HCT116 (cell line): ENCODE measurements at regions of chr16 and their contacts with region 1.

Region 1: DNA sequence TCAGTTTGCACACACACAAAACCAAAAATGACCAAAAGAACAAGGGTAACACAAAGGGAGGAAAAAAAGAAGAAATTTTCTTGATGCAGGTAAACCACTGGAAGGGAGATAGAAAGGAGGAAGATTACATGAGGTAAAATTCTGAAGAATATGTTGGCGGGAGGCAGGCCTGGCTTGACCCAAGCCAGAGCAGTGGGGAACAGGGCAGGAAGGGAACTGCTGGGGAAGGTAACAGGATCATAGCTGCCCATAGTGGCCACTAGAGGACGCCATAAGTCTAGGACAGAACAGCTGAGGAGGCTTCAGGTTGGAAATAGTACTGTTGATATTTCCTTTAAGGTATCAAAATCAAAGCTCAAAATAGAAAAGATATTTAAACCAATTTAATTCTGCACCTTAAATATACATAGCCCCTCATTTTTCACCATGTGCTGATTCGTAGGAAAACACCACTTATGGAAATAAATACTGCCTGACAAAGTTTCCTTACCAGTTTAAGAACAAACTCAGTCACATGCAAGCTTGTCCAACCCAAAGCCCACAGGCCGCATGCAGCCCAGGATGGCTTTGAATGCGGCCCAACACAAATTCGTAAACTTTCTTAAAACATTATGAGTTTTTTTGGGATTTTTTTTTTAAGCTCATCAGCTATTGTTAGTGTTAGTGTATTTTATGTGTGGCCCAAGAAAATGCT is 15.5 kb downstream of the VPS35 start:
- DNase-seq: peak; percentile 51
- ATAC-seq: peak; percentile 100
- H3K4me3 ChIP-seq: no peak overlapping the region
- H3K27ac ChIP-seq: no peak overlapping the region
- H3K4me1 ChIP-seq: no peaks in the 10 kb centered on the region
- H3K27me3 ChIP-seq: no peaks in the 10 kb centered on the region
- CTCF ChIP-seq: peak; percentile 46 to 99 (median 98); a peak in 5 of 6 replicates
- POLR2A ChIP-seq: no peak
- RAD21 ChIP-seq: peak; percentile 76

Region 2: DNA sequence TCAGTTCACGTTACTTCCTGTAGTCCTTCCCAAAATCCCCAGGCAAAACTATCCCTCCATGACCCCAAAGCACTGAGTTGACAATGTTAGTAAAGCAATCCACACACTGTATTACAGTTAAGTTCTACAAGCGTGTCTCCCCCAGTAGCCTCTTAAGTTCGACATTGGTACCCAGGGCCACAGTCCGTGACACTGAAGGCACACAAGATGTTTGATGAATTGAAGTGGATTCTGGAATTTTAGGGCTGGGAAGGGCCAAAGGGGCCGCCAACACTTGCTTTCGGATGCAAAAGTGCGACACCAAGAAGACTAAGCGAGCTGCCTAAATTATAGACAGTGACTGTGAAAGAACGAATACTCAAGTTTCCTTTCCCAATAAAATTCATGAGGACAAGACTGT is 14.0 kb after region 1 on chr16:
- CTCF ChIA-PET with region 1: interaction called, 12 read pairs
- POLR2A ChIA-PET with region 1: no interaction called
- RAD21 ChIA-PET with region 1: no interaction called
- intact Hi-C with region 1: no loop called
- DNase-seq: no peak
- ATAC-seq: no peak
- H3K4me3 ChIP-seq: peak overlapping the region; percentile 82 to 95
- H3K27ac ChIP-seq: no peak overlapping the region
- H3K4me1 ChIP-seq: peaks cover 14 to 23% of the 10 kb centered on the region in 2 experiments; a peak in 3 of 4 replicates
- H3K27me3 ChIP-seq: no peaks in the 10 kb centered on the region
- CTCF ChIP-seq: no peak
- POLR2A ChIP-seq: no peak
- RAD21 ChIP-seq: no peak

Region 3: DNA sequence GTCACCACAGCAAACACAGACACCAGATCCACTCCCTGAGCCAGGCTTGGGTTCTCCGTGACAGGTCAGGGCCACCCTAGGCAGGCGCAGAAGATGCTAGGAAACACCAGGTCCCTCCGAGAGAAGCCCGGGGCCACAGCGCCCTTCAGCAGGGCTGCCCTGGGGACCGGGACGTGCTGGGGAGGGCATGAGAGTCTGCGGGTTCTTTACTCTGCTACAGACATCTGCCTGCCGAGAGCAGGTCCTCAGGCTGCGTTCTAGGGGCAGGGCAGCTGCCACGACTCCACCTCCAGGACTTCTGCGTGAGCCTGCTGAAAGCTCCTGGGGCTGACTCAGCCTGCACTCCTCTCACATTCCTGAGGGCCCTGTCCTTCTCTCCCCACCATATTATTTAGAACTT is 63.2 kb after region 1 on chr16:
- CTCF ChIA-PET with region 1: no interaction called
- POLR2A ChIA-PET with region 1: no interaction called
- RAD21 ChIA-PET with region 1: no interaction called
- intact Hi-C with region 1: no loop called
- DNase-seq: no peak
- ATAC-seq: no peak
- H3K4me3 ChIP-seq: no peak overlapping the region
- H3K27ac ChIP-seq: no peak overlapping the region
- H3K4me1 ChIP-seq: no peaks in the 10 kb centered on the region
- H3K27me3 ChIP-seq: no peaks in the 10 kb centered on the region
- CTCF ChIP-seq: no peak
- POLR2A ChIP-seq: no peak
- RAD21 ChIP-seq: no peak

Region 4: GRCh38 chr16:46801428-46802049 is 128.1 kb after region 1 on chr16:
- CTCF ChIA-PET with region 1: interaction called, 51 read pairs
- POLR2A ChIA-PET with region 1: no interaction called
- RAD21 ChIA-PET with region 1: no interaction called
- intact Hi-C with region 1: loop called (anchors 2 kb)
- DNase-seq: no peak
- ATAC-seq: peak; percentile 70
- H3K4me3 ChIP-seq: no peak overlapping the region
- H3K27ac ChIP-seq: no peak overlapping the region
- H3K4me1 ChIP-seq: no peaks in the 10 kb centered on the region
- H3K27me3 ChIP-seq: no peaks in the 10 kb centered on the region
- CTCF ChIP-seq: peak; percentile 29 to 57 (median 43); a peak in 4 of 6 replicates
- POLR2A ChIP-seq: no peak
- RAD21 ChIP-seq: peak; percentile 29; the same call in 1 of the 2 replicates

Region 5: GRCh38 chr16:46853713-46854443 is 180.4 kb after region 1 on chr16:
- CTCF ChIA-PET with region 1: interaction called, 17 read pairs
- POLR2A ChIA-PET with region 1: no interaction called
- RAD21 ChIA-PET with region 1: no interaction called
- intact Hi-C with region 1: no loop called
- DNase-seq: peak; percentile 50
- ATAC-seq: peak; percentile 84
- H3K4me3 ChIP-seq: no peak overlapping the region
- H3K27ac ChIP-seq: no peak overlapping the region
- H3K4me1 ChIP-seq: peaks cover 1 to 11% of the 10 kb centered on the region in 2 experiments; a peak in 3 of 4 replicates
- H3K27me3 ChIP-seq: no peaks in the 10 kb centered on the region
- CTCF ChIP-seq: peak; percentile 80 to 81 (median 81)
- POLR2A ChIP-seq: no peak
- RAD21 ChIP-seq: peak; percentile 94

Region 6: GRCh38 chr16:46908540-46909372 is 235.3 kb after region 1 on chr16:
- CTCF ChIA-PET with region 1: interaction called, 9 read pairs
- POLR2A ChIA-PET with region 1: no interaction called
- RAD21 ChIA-PET with region 1: interaction called in 1 of 2 experiments, 3 read pairs
- intact Hi-C with region 1: loop called (anchors 2 kb)
- DNase-seq: peak; percentile 57
- ATAC-seq: peak; percentile 81
- H3K4me3 ChIP-seq: no peak overlapping the region
- H3K27ac ChIP-seq: no peak overlapping the region
- H3K4me1 ChIP-seq: no peaks in the 10 kb centered on the region
- H3K27me3 ChIP-seq: no peaks in the 10 kb centered on the region
- CTCF ChIP-seq: peak; percentile 52 to 68 (median 59); a peak in 5 of 6 replicates
- POLR2A ChIP-seq: no peak
- RAD21 ChIP-seq: peak; percentile 69

Region 7: GRCh38 chr16:46929378-46930332 is 256.2 kb after region 1 on chr16:
- CTCF ChIA-PET with region 1: interaction called, 3 read pairs
- POLR2A ChIA-PET with region 1: no interaction called
- RAD21 ChIA-PET with region 1: no interaction called
- intact Hi-C with region 1: loop called (anchors 5 kb)
- DNase-seq: peak; percentile 18
- ATAC-seq: peak; percentile 96
- H3K4me3 ChIP-seq: no peak overlapping the region
- H3K27ac ChIP-seq: no peak overlapping the region
- H3K4me1 ChIP-seq: no peaks in the 10 kb centered on the region
- H3K27me3 ChIP-seq: no peaks in the 10 kb centered on the region
- CTCF ChIP-seq: peak; percentile 55 to 95 (median 93)
- POLR2A ChIP-seq: no peak
- RAD21 ChIP-seq: peak; percentile 70